ENCODE measurements at regions of chr17 and their contacts with region 1.

Region 1: DNA sequence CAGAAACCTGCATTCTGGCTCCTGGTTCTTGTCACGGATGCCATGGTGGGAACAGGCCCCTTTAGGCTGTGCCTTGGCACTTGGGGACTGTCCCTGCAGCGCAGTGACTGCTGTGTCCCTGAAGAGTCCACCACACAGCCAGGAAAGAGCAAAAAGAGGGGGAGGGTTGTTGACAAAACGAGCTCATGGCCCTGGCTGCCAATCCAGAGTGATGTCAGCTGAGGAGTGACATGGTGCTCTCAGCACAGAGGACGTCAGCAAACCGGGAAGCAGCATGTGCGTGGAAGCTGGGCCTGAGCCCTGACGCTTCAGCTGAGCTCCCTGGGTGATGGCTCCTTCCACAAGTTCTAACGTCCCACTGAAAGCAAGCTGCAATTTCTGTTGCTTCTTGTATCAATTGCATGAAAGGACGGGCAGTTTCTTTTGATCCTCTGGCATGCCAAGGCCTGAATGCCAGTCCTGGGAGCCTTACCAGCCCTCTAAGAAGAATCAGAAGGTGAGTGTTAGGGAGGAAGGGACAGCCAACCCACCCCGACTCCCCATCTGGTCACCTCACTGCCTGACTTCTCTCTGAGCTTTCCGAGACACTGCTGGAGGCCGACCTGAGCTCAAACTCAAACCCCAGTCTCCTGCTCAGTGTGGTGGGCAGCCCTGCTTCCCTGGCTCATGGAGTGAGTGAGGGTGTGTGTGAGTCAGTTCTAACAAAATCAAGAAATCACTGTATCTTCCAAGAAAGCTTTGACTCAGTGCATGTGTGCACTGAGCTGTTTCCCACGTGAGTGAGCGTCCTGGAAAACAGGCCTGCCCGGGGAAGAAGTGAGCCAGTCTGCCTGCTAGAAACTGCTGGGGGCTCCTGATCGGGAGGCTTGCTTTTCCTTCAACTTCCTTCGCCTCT is 14.7 kb upstream of the WNT3 start:
- DNase-seq: no peak
- ATAC-seq: no peak
- H3K4me3 ChIP-seq: no peak overlapping the region
- H3K27ac ChIP-seq: no peak overlapping the region
- H3K4me1 ChIP-seq: no peaks in the 10 kb centered on the region
- CTCF ChIP-seq: no peak
- EP300 ChIP-seq: no peak
- POLR2A ChIP-seq: no peak
- RAD21 ChIP-seq: no peak

Region 2: DNA sequence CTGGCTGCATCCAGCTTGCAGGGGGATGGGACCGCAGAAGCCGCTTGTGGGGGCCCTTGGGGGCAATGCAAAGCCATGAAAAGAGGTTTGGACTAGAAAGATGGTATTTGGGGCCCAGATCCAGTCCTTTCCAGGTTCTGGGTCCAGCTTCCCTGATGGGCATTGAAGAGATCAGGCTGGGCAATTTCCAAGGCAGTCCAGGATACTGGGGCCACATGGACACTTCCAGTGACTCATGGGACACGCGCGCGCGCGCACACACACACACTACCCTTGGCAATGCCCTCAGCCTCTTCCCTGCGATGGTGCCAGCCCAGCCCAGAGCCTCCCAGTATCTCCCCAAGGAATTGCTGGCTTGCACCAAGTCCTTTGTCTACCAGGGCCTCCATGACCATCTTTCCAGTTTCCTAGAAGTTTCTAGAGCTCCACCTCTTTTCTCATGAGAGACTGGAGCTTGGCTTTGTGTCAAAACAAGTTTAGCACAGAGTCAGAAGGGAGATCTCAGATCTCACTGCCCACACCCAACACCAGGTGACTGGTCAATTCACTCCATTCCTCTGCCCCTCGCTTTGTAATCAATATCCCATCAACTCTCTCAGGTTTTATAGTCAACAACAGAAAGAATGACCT is 59.0 kb before region 1 on chr17:
- CTCF ChIA-PET with region 1: interaction called, 15 read pairs
- POLR2A ChIA-PET with region 1: interaction called, 3 read pairs
- DNase-seq: peak in 1 of 2 experiments; percentile 47
- ATAC-seq: no peak
- H3K4me3 ChIP-seq: no peak overlapping the region
- H3K27ac ChIP-seq: peak overlapping the region in 1 of 2 experiments; percentile 8; a peak in 1 of 6 replicates
- H3K4me1 ChIP-seq: peaks cover 28% of the 10 kb centered on the region
- CTCF ChIP-seq: no peak
- EP300 ChIP-seq: no peak
- POLR2A ChIP-seq: no peak
- RAD21 ChIP-seq: no peak

Region 3: DNA sequence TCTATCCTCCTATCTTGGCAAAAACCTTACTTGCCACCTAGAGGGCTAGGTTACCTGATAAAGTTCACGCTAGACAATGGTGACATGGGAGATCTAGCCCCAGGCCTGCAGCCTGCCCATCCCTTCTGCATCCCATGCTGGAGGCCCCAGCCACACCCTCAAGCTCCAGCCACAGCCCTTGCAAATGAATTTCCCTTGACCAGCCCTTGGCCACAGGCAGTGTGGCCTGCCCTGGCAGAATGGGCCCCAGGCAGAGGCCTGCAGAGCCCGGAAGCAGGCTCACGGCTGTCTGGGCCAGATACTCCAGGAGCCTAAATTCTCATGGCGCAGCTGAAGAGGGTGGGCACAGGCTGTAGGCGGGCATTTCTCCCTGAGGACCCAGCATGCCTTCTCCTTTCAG is 29.6 kb before region 1 on chr17:
- CTCF ChIA-PET with region 1: interaction called, 12 read pairs
- POLR2A ChIA-PET with region 1: no interaction called
- DNase-seq: no peak
- ATAC-seq: peak; percentile 25 to 27; a peak in 1 of 6 replicates
- H3K4me3 ChIP-seq: no peak overlapping the region
- H3K27ac ChIP-seq: no peak overlapping the region
- H3K4me1 ChIP-seq: no peaks in the 10 kb centered on the region
- CTCF ChIP-seq: no peak
- EP300 ChIP-seq: no peak
- POLR2A ChIP-seq: no peak
- RAD21 ChIP-seq: no peak

Region 4: GRCh38 chr17:46822388-46822921 is 10.7 kb before region 1 on chr17:
- CTCF ChIA-PET with region 1: interaction called, 138 read pairs
- POLR2A ChIA-PET with region 1: no interaction called
- DNase-seq: peak in 1 of 2 experiments; percentile 45
- ATAC-seq: peak; percentile 19 to 70; a peak in 4 of 6 replicates
- H3K4me3 ChIP-seq: 0 out of 3 replicates have a peak overlapping the region, but pooled peaks have one; percentile 16
- H3K27ac ChIP-seq: peak overlapping the region in 1 of 2 experiments; percentile 44; a peak in 1 of 6 replicates
- H3K4me1 ChIP-seq: no peaks in the 10 kb centered on the region
- CTCF ChIP-seq: peak; percentile 91
- EP300 ChIP-seq: no peak
- POLR2A ChIP-seq: no peak
- RAD21 ChIP-seq: peak; percentile 71 to 75

Region 5: GRCh38 chr17:46853896-46854444 is 20.8 kb after region 1 on chr17:
- CTCF ChIA-PET with region 1: interaction called, 22 read pairs
- POLR2A ChIA-PET with region 1: no interaction called
- DNase-seq: no peak
- ATAC-seq: no peak
- H3K4me3 ChIP-seq: no peak overlapping the region
- H3K27ac ChIP-seq: no peak overlapping the region
- H3K4me1 ChIP-seq: peaks cover 5% of the 10 kb centered on the region; the same call in 1 of the 3 replicates
- CTCF ChIP-seq: no peak
- EP300 ChIP-seq: no peak
- POLR2A ChIP-seq: no peak
- RAD21 ChIP-seq: no peak

Region 6: DNA sequence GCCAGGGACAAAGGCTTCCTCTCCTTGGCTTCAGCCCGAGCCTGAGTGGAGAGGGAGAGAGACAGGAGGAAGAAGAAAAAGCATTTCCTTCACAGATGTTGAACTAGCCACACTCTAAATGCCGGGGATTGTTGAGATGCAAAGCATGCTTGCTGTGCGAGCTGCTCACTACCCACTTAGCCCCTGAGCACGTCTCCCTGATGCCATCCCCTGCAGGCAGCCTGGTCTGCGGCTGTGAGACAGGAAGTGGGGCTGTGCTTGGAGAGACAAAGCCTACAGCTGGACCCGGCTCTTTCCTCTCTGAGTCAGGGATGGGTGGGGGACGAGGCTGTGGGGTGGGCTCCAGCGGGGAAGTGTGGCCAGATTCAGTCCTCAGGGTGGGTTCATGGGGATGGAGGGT is 31.9 kb after region 1 on chr17:
- CTCF ChIA-PET with region 1: interaction called, 11 read pairs
- POLR2A ChIA-PET with region 1: no interaction called
- DNase-seq: no peak
- ATAC-seq: peak in 1 of 2 experiments; percentile 11; a peak in 1 of 6 replicates
- H3K4me3 ChIP-seq: no peak overlapping the region
- H3K27ac ChIP-seq: no peak overlapping the region
- H3K4me1 ChIP-seq: peaks cover 23% of the 10 kb centered on the region
- CTCF ChIP-seq: no peak
- EP300 ChIP-seq: no peak
- POLR2A ChIP-seq: no peak
- RAD21 ChIP-seq: no peak

Region 7: GRCh38 chr17:46940621-46941404 is 107.6 kb after region 1 on chr17:
- CTCF ChIA-PET with region 1: interaction called, 45 read pairs
- POLR2A ChIA-PET with region 1: no interaction called
- DNase-seq: peak; percentile 84 to 97
- ATAC-seq: peak; percentile 74 to 85
- H3K4me3 ChIP-seq: no peak overlapping the region
- H3K27ac ChIP-seq: peak overlapping the region in 1 of 2 experiments; percentile 46; a peak in 2 of 6 replicates
- H3K4me1 ChIP-seq: no peaks in the 10 kb centered on the region
- CTCF ChIP-seq: peak; percentile 95
- EP300 ChIP-seq: no peak
- POLR2A ChIP-seq: no peak
- RAD21 ChIP-seq: peak; percentile 85 to 91

Measured in A549 (cell line).